B cell (primary cell): ENCODE measurements at regions of chr20 and their contacts with region 1.

Region 1: DNA sequence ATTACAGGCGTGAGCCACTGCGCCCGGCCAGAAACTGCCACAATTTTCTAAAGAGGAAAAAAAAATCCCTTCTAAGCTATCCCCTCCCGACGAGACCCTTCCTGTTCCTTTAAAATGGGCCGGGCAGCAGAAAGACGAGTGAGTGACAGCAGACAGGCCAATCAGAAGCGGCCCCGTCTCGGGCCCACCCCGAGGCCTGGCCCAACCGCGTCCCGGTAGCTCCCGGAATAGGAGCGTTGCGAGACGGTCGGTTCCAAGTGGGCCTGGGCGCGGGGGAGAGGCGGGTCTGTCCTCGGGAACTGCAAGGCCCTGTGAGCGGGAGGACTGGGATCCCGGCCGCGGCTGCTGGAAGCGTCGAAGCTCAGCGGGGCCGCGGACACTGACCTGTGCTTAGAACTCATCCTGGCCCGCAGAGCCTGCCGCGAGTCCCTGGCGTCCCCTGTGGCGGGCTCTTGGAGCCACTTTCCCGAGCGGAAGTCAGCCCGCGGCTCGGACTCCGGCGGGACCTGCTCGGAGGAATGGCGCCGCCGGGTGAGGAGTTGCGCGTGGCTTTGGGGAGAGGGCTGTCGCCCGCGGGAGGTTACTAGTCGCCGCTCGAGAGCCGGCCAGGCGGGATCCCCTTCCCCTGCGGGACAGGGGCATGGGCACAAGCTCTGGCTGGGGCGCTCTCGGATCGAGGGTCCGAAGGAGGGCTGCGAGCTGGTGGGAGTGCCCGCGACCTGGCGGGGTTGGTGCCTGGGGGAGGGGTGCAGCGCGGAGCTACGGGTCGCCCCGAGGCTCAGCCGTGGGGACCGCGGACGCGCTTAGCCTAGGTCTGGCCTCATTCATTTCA is at the starts of genes MROH8 and RPN2:
- DNase-seq: peak; percentile 95
- ATAC-seq: peak; percentile 91
- H3K4me3 ChIP-seq: peak within 1 kb of the TSS; percentile 85 to 100 (median 89)
- H3K4me3 Mint-ChIP-seq: peak within 1 kb of the TSS; percentile 98
- H3K27ac ChIP-seq: peak within 1 kb of the TSS; percentile 80 to 95
- H3K27ac Mint-ChIP-seq: peak within 1 kb of the TSS; percentile 99
- H3K4me1 ChIP-seq: peaks cover 24 to 34% of the 10 kb centered on the region in 2 donors
- H3K4me1 Mint-ChIP-seq: peaks cover 40% of the 10 kb centered on the region
- H3K27me3 ChIP-seq: no peaks in the 10 kb centered on the region
- H3K27me3 Mint-ChIP-seq: no peaks in the 10 kb centered on the region
- CTCF ChIP-seq: no peak
- total RNA-seq, gene MROH8: 4.6 and 6.3 TPM in 2 replicates
- total RNA-seq, gene RPN2: 80.2 and 86.9 TPM in 2 replicates

Region 2: GRCh38 chr20:36460648-36461599 is 718.1 kb before region 1 on chr20:
- CTCF ChIA-PET with region 1: no interaction called
- POLR2A ChIA-PET with region 1: no interaction called
- intact Hi-C with region 1: loop called (anchors 2 kb)
- DNase-seq: peak; percentile 97
- ATAC-seq: peak; percentile 80
- H3K4me3 ChIP-seq: peak overlapping the region; percentile 40 to 79 (median 47)
- H3K4me3 Mint-ChIP-seq: peak overlapping the region; percentile 81
- H3K27ac ChIP-seq: peak overlapping the region; percentile 96 to 98
- H3K27ac Mint-ChIP-seq: peak overlapping the region; percentile 91
- H3K4me1 ChIP-seq: peaks cover 42 to 49% of the 10 kb centered on the region in 2 donors
- H3K4me1 Mint-ChIP-seq: peaks cover 46% of the 10 kb centered on the region
- H3K27me3 ChIP-seq: no peaks in the 10 kb centered on the region
- H3K27me3 Mint-ChIP-seq: no peaks in the 10 kb centered on the region
- CTCF ChIP-seq: no peak

Region 3: GRCh38 chr20:37007898-37008649 is 171.0 kb before region 1 on chr20:
- CTCF ChIA-PET with region 1: interaction called, 13 read pairs
- POLR2A ChIA-PET with region 1: no interaction called
- intact Hi-C with region 1: loop called (anchors 2 kb)
- DNase-seq: peak; percentile 51
- ATAC-seq: peak; percentile 36
- H3K4me3 ChIP-seq: no peak overlapping the region
- H3K4me3 Mint-ChIP-seq: peak overlapping the region; percentile 70
- H3K27ac ChIP-seq: peak overlapping the region; percentile 35 to 57
- H3K27ac Mint-ChIP-seq: peak overlapping the region; percentile 59
- H3K4me1 ChIP-seq: peaks cover 46 to 55% of the 10 kb centered on the region in 2 donors
- H3K4me1 Mint-ChIP-seq: peaks cover 38% of the 10 kb centered on the region
- H3K27me3 ChIP-seq: no peaks in the 10 kb centered on the region
- H3K27me3 Mint-ChIP-seq: no peaks in the 10 kb centered on the region
- CTCF ChIP-seq: peak; percentile 24

Region 4: DNA sequence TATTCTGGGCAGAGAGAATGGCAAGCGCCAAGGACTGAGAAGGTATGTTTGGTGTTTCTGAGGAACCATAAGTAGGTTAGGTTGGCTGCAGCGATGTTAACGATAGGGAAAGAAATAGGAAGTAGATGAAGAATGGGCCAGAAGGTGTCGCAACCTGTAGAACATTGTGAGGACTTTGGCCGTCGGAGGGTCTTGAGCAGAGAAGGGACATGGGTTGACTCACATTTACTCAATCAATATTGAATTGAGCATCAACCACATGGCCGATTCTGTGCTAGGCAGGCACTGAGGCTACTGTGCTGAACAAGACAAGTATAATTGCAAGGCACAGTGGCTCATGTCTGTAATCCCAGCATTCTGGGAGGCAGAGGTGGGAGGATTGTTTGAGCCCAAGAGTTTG is 26.8 kb before region 1 on chr20:
- CTCF ChIA-PET with region 1: no interaction called
- POLR2A ChIA-PET with region 1: no interaction called
- intact Hi-C with region 1: no loop called
- DNase-seq: no peak
- ATAC-seq: no peak
- H3K4me3 ChIP-seq: no peak overlapping the region
- H3K4me3 Mint-ChIP-seq: no peak overlapping the region
- H3K27ac ChIP-seq: no peak overlapping the region
- H3K27ac Mint-ChIP-seq: no peak overlapping the region
- H3K4me1 ChIP-seq: no peaks in the 10 kb centered on the region
- H3K4me1 Mint-ChIP-seq: no peaks in the 10 kb centered on the region
- H3K27me3 ChIP-seq: no peaks in the 10 kb centered on the region
- H3K27me3 Mint-ChIP-seq: no peaks in the 10 kb centered on the region
- CTCF ChIP-seq: no peak

Region 5: GRCh38 chr20:37243076-37243936 is 64.3 kb after region 1 on chr20:
- CTCF ChIA-PET with region 1: no interaction called
- POLR2A ChIA-PET with region 1: no interaction called
- intact Hi-C with region 1: no loop called
- DNase-seq: no peak
- ATAC-seq: no peak
- H3K4me3 ChIP-seq: no peak overlapping the region
- H3K4me3 Mint-ChIP-seq: no peak overlapping the region
- H3K27ac ChIP-seq: no peak overlapping the region
- H3K27ac Mint-ChIP-seq: no peak overlapping the region
- H3K4me1 ChIP-seq: no peaks in the 10 kb centered on the region
- H3K4me1 Mint-ChIP-seq: no peaks in the 10 kb centered on the region
- H3K27me3 ChIP-seq: no peaks in the 10 kb centered on the region
- H3K27me3 Mint-ChIP-seq: no peaks in the 10 kb centered on the region
- CTCF ChIP-seq: no peak

Region 6: DNA sequence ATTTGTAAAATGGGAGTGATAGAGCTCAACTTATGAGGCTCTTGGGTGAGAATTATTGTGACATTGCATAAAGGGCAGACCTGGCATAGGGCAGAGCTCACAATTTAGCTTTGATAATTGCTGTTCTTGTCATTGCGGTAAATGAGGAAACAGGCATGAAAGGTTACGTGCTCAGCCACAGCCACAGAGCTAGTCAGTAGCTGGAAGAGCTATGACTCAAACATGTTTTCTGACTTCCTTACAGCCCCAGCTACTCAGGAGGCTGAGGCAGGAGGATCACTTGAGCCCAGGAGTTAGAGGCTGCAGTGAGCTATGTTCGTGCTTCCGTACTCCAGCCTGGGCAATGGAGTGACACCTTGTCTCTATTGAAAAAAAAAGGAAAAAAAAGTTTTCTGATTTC is 86.1 kb after region 1 on chr20:
- CTCF ChIA-PET with region 1: no interaction called
- POLR2A ChIA-PET with region 1: no interaction called
- intact Hi-C with region 1: no loop called
- DNase-seq: peak; percentile 54
- ATAC-seq: peak; percentile 75
- H3K4me3 ChIP-seq: no peak overlapping the region
- H3K4me3 Mint-ChIP-seq: no peak overlapping the region
- H3K27ac ChIP-seq: no peak overlapping the region
- H3K27ac Mint-ChIP-seq: no peak overlapping the region
- H3K4me1 ChIP-seq: peaks cover 10 to 17% of the 10 kb centered on the region in 2 donors
- H3K4me1 Mint-ChIP-seq: peaks cover 13% of the 10 kb centered on the region
- H3K27me3 ChIP-seq: no peaks in the 10 kb centered on the region
- H3K27me3 Mint-ChIP-seq: peaks cover 12% of the 10 kb centered on the region
- CTCF ChIP-seq: no peak

Region 7: DNA sequence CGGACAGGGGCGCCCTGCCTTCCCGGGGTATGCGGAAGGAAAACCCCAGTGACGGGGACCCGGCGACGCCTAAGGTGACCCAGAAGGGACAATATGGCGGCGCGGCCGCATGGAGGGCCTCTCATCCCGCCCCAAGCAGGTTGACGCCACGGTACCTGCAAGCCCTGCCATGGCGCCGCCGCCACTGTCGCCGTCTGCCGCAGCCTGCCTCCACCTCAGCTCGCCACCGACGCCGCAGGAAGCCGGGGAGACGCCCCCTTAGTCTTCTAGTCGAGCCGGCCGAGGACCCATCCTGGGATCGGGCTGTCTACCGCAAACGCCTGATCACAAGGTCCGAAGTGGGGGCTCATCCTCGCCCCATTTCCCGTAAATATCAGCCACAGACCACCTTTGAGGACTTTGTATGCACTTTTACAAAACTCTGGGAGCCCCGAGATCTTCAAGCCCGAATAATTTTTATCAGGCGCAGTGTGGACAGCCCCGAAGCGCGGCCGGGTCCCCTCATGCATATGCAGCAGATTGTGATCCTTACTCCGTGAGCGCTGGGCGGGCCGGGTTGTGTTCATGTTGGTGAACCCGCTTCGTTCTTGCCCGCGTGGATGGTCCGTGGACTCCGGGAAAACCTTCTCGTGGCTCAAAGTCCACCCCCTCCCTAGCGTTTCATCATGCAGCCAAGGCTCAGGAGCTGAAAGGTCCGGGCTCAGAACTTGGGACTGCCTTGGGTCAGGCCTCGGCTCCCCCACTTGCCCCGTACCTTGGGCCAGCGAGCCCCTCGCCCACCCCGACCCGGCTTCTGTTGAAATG is 348.8 kb after region 1 on chr20 and contains the start of gene BLCAP:
- CTCF ChIA-PET with region 1: interaction called, 3 read pairs
- POLR2A ChIA-PET with region 1: interaction called, 5 read pairs
- intact Hi-C with region 1: loop called (anchors 1 kb)
- DNase-seq: peak; percentile 97
- ATAC-seq: peak; percentile 85
- H3K4me3 ChIP-seq: peak within 1 kb of the TSS; percentile 82 to 99 (median 96)
- H3K4me3 Mint-ChIP-seq: peak within 1 kb of the TSS; percentile 89
- H3K27ac ChIP-seq: peak within 1 kb of the TSS; percentile 100
- H3K27ac Mint-ChIP-seq: peak within 1 kb of the TSS; percentile 100
- H3K4me1 ChIP-seq: peaks cover 36 to 41% of the 10 kb centered on the region in 2 donors
- H3K4me1 Mint-ChIP-seq: peaks cover 50% of the 10 kb centered on the region
- H3K27me3 ChIP-seq: no peaks in the 10 kb centered on the region
- H3K27me3 Mint-ChIP-seq: no peaks in the 10 kb centered on the region
- CTCF ChIP-seq: no peak
- total RNA-seq, gene BLCAP: 187 and 188 TPM in 2 replicates

Region 8: DNA sequence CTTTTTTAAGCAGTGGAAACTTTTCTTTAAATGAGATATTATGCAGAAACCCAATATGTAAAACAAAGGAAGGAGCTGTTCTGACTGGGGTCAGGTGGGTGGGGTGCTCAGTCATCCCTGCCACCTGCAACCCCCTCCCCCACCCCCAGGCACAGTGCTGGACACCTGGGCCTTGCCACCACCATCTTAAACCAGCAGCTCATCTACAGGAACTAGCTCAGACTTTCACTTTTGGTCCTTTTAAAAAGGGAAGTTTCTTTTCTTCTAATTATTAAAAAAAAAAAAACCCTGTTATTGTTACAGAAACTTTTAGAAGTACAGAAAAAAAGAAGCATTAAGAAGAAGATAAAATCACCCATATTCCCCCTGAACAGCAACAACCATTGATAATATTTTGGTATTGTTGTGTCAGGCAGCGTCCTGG is 1663.5 kb after region 1 on chr20:
- CTCF ChIA-PET with region 1: no interaction called
- POLR2A ChIA-PET with region 1: no interaction called
- intact Hi-C with region 1: loop called (anchors 5 kb)
- DNase-seq: peak; percentile 95
- ATAC-seq: peak; percentile 99
- H3K4me3 ChIP-seq: peak overlapping the region in 2 of 5 experiments; percentile 12 to 48
- H3K4me3 Mint-ChIP-seq: peak overlapping the region; percentile 83
- H3K27ac ChIP-seq: peak overlapping the region; percentile 92 to 96
- H3K27ac Mint-ChIP-seq: peak overlapping the region; percentile 99
- H3K4me1 ChIP-seq: peaks cover 79 to 88% of the 10 kb centered on the region in 2 donors
- H3K4me1 Mint-ChIP-seq: peaks cover 88% of the 10 kb centered on the region
- H3K27me3 ChIP-seq: no peaks in the 10 kb centered on the region
- H3K27me3 Mint-ChIP-seq: no peaks in the 10 kb centered on the region
- CTCF ChIP-seq: no peak